ENCODE measurements at regions of chr10 and their contacts with region 1.

Region 1: GRCh38 chr10:99620713-99621453 is 644 bp upstream of the SLC25A28 start:
- DNase-seq: peak; percentile 77 to 85
- H3K4me3 ChIP-seq: peak overlapping the region; percentile 82
- H3K27ac ChIP-seq: peak overlapping the region; percentile 91
- H3K4me1 ChIP-seq: peaks cover 20% of the 10 kb centered on the region
- H3K27me3 ChIP-seq: no peaks in the 10 kb centered on the region
- CTCF ChIP-seq: no peak

Region 2: DNA sequence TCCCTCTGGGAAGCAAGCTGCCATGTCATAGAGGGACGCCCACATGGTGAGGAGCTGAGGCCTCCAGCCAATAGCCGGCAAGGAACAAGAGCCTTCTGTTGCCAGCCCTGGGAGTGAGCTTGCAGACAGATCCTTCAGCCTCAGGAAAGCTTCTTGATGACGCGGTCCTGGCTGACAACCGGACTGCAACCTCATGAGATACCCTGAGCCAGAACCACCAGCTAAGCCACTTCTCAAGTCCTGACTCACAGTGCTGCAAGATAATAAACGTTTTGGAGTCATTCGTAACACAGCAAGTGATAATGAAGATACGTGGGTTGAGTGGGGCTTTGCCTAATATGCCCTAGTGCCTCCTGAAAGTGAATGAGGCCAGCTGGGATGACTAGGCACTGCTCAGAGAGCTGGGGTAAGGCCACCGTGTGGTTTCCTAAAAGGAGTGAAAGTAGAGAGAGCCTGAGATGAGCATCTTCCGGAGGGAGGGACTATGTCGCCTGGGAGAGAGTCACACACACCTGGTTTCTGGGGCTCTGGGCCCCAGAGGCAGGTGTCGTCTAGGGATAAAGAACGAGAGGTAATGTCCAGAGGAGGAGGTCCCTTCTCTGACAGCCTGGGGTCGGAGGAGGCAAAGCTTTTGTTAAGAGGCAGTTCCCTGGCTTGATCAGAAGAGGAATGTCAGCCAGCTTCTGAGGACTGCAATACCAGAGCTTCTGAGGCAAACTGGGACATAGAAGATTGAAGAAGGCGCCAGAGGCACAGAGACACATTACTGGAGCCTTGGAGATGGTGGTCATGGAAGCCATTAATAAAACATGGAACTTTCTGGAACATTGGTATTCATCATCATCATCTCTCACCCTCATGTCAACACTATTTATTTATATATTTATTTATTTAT is 1259.5 kb before region 1 on chr10:
- CTCF ChIA-PET with region 1: no interaction called
- POLR2A ChIA-PET with region 1: interaction called, 11 read pairs
- intact Hi-C with region 1: no loop called
- DNase-seq: peak; percentile 74 to 94
- H3K4me3 ChIP-seq: peak overlapping the region; percentile 34; the same call in 1 of the 2 replicates
- H3K27ac ChIP-seq: peak overlapping the region; percentile 70
- H3K4me1 ChIP-seq: peaks cover 59% of the 10 kb centered on the region
- H3K27me3 ChIP-seq: no peaks in the 10 kb centered on the region
- CTCF ChIP-seq: no peak

Region 3: GRCh38 chr10:99430451-99431189 is 190.3 kb before region 1 on chr10 and contains the start of gene GOT1:
- CTCF ChIA-PET with region 1: no interaction called
- POLR2A ChIA-PET with region 1: no interaction called
- intact Hi-C with region 1: loop called (anchors 2 kb)
- DNase-seq: peak; percentile 88 to 96
- H3K4me3 ChIP-seq: peak within 1 kb of the TSS; percentile 88
- H3K27ac ChIP-seq: peak within 1 kb of the TSS; percentile 71
- H3K4me1 ChIP-seq: no peaks in the 10 kb centered on the region
- H3K27me3 ChIP-seq: no peaks in the 10 kb centered on the region
- CTCF ChIP-seq: no peak
- total RNA-seq, gene GOT1: 27.5 and 28.6 TPM in 2 replicates

Region 4: GRCh38 chr10:99532687-99533495 is 88.0 kb before region 1 on chr10 and contains the start of gene NKX2-3:
- CTCF ChIA-PET with region 1: no interaction called
- POLR2A ChIA-PET with region 1: no interaction called
- intact Hi-C with region 1: no loop called
- DNase-seq: no peak
- H3K4me3 ChIP-seq: no peak within 1 kb of the TSS
- H3K27ac ChIP-seq: no peak within 1 kb of the TSS
- H3K4me1 ChIP-seq: no peaks in the 10 kb centered on the region
- H3K27me3 ChIP-seq: peaks cover 16% of the 10 kb centered on the region; the same call in 1 of the 2 replicates
- CTCF ChIP-seq: no peak
- total RNA-seq, gene NKX2-3: not detected in 2 replicates

Region 5: GRCh38 chr10:99659031-99659867 is 38.4 kb after region 1 on chr10 and contains the start of gene ENTPD7:
- CTCF ChIA-PET with region 1: interaction called, 4 read pairs
- POLR2A ChIA-PET with region 1: interaction called, 5 read pairs
- intact Hi-C with region 1: loop called (anchors 1 kb)
- DNase-seq: peak; percentile 89 to 93
- H3K4me3 ChIP-seq: peak within 1 kb of the TSS; percentile 98
- H3K27ac ChIP-seq: peak within 1 kb of the TSS; percentile 12; the same call in 1 of the 2 replicates
- H3K4me1 ChIP-seq: peaks cover 37% of the 10 kb centered on the region
- H3K27me3 ChIP-seq: no peaks in the 10 kb centered on the region
- CTCF ChIP-seq: no peak; the same call in 1 of the 2 replicates
- total RNA-seq, gene ENTPD7: 4.2 and 5.4 TPM in 2 replicates

Region 6: DNA sequence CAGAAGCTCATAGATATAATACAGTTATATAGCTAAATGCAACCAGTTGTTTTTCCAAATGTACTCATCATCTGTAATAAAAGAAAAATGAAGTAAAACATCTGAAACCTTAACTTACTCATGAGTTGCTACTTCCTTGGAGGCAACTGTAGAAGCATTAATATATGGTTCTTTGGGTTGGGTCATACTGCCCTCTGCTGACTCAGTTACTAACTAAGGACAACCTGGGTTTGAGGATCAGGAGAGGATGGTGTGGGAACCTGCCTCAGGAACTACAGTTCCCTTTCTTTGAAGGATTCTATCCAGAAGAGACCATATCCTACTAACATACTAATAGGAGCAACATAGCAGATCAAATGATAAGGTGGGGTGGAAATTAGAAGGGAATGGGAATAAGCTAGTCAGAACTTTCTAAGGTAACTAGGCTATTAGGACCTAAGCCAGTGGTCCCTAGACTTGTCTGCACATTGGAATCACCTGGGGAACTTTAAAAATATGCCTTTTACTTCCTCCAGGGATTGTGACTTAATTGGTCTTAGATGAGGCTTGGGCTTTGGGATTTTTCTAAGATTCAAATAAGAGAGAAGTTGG is 90.3 kb after region 1 on chr10:
- CTCF ChIA-PET with region 1: no interaction called
- POLR2A ChIA-PET with region 1: interaction called, 4 read pairs
- intact Hi-C with region 1: loop called (anchors 2 kb)
- DNase-seq: peak in 1 of 2 experiments; percentile 10
- H3K4me3 ChIP-seq: no peak overlapping the region
- H3K27ac ChIP-seq: no peak overlapping the region
- H3K4me1 ChIP-seq: no peaks in the 10 kb centered on the region
- H3K27me3 ChIP-seq: no peaks in the 10 kb centered on the region
- CTCF ChIP-seq: peak; percentile 67; the same call in 1 of the 2 replicates

Region 7: DNA sequence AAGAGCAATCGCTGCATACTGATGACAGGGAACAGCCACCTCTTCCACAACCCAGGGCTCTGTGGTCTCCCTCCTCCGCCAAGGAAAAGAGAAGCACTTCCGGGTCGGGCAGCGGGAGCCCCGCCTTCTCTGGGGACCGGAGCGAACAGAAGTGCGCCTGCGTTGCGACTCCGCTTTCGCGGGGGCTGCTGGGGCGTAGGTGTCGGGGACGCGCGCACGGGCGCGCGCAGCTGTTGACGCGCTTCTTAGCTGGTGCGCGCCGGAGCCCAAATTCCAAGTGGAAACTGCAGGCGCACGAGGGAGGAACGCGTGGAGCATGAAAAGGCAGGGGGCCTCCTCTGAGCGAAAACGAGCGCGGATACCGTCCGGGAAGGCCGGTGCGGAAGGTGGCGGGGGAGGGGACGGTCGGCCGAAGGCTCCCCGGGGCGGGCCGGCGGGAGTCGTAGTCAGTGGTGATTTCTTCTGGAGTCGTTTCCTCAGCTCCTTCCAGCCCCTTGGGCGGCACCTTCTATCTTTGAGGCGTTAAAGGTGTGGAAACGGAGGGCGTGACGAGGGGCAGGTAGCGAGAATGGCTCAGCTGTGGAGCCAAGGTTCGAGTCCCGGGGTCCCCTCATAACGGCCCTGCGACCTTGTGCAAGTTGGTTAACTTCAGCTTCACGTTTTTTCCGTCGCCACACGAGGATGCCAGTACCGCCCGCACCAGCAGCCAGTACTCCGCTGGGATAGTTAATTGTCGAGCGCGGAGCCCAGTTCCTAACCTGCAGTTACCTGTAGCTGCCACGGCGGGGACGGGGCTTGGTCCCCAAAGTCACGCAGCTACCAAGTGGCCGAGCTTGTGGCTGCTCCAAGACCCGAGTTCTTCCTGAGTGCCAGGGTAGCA is 111.4 kb after region 1 on chr10 and contains the starts of genes COX15 and CUTC:
- CTCF ChIA-PET with region 1: no interaction called
- POLR2A ChIA-PET with region 1: no interaction called
- intact Hi-C with region 1: loop called (anchors 1 kb)
- DNase-seq: peak; percentile 87 to 90
- H3K4me3 ChIP-seq: peak within 1 kb of the TSS; percentile 93
- H3K27ac ChIP-seq: peak within 1 kb of the TSS; percentile 86
- H3K4me1 ChIP-seq: peaks cover 10% of the 10 kb centered on the region; the same call in 1 of the 2 replicates
- H3K27me3 ChIP-seq: no peaks in the 10 kb centered on the region
- CTCF ChIP-seq: peak; percentile 64
- total RNA-seq, gene COX15: 31.4 and 35.2 TPM in 2 replicates
- total RNA-seq, gene CUTC: 7.6 and 9.2 TPM in 2 replicates

Region 8: GRCh38 chr10:99779335-99779734 is 158.5 kb after region 1 on chr10:
- CTCF ChIA-PET with region 1: no interaction called
- POLR2A ChIA-PET with region 1: no interaction called
- intact Hi-C with region 1: loop called (anchors 2 kb)
- DNase-seq: peak; percentile 26 to 67
- H3K4me3 ChIP-seq: peak overlapping the region; percentile 53; the same call in 1 of the 2 replicates
- H3K27ac ChIP-seq: peak overlapping the region; percentile 100
- H3K4me1 ChIP-seq: peaks cover 70% of the 10 kb centered on the region
- H3K27me3 ChIP-seq: no peaks in the 10 kb centered on the region
- CTCF ChIP-seq: no peak

Measured in PC-9 (cell line).